ENCODE measurements at regions of chr3 and their contacts with region 1.

Region 1: GRCh38 chr3:143348486-143349327 is 229.1 kb downstream of the CHST2 start:
- DNase-seq: no peak
- H3K4me3 ChIP-seq: no peak overlapping the region
- H3K27ac ChIP-seq: no peak overlapping the region
- H3K4me1 ChIP-seq: 0 out of 7 replicates have a peak, but pooled peaks cover 0 to 2% (median 0%) of the 10 kb centered on the region in 4 experiments
- H3K27me3 ChIP-seq: no peaks in the 10 kb centered on the region
- CTCF ChIP-seq: peak in 2 of 3 experiments; percentile 18 to 54; a peak in 2 of 4 replicates
- EP300 ChIP-seq: no peak
- POLR2A ChIP-seq: no peak
- RAD21 ChIP-seq: peak; percentile 47 to 59

Region 2: GRCh38 chr3:143337387-143337786 is 11.3 kb before region 1 on chr3:
- CTCF ChIA-PET with region 1: interaction called, 17 read pairs
- POLR2A ChIA-PET with region 1: no interaction called
- DNase-seq: no peak
- H3K4me3 ChIP-seq: no peak overlapping the region
- H3K27ac ChIP-seq: no peak overlapping the region
- H3K4me1 ChIP-seq: no peaks in the 10 kb centered on the region
- H3K27me3 ChIP-seq: no peaks in the 10 kb centered on the region
- CTCF ChIP-seq: no peak
- EP300 ChIP-seq: no peak
- POLR2A ChIP-seq: no peak
- RAD21 ChIP-seq: no peak

Region 3: DNA sequence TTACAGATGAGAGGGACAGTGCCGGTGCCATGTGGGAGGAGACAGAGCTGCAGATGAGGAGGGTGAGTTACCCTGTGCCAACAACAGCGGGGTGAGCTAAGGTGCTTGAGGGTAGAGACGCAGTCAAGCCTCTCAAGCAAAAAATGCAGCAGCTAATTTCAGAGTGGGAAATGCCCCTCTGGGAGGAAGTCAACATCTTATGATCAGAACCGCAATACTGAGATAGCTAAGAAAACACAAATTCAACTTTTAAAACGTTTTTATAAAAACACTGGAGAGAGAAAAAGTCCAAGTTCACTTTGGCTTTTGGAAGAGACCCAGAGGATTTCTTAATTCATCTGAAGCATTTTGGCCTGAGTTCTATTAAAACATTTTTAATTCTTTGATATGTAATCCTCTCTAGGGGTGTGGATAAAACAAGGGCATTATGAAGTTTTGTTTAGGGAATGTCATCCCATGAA is 180.3 kb after region 1 on chr3:
- CTCF ChIA-PET with region 1: no interaction called
- POLR2A ChIA-PET with region 1: no interaction called
- DNase-seq: no peak
- H3K4me3 ChIP-seq: no peak overlapping the region
- H3K27ac ChIP-seq: no peak overlapping the region
- H3K4me1 ChIP-seq: no peaks in the 10 kb centered on the region
- H3K27me3 ChIP-seq: no peaks in the 10 kb centered on the region
- CTCF ChIP-seq: no peak
- EP300 ChIP-seq: no peak
- POLR2A ChIP-seq: no peak
- RAD21 ChIP-seq: no peak